Activated CD4-positive, alpha-beta T cell treated with anti-CD3 and anti-CD28 coated beads for 36 hours (primary cell): ENCODE measurements at regions of chr3 and their contacts with region 1.

Region 1: GRCh38 chr3:31559872-31560534 is 27.3 kb downstream of the STT3B start:
- DNase-seq: no peak
- ATAC-seq: peak; percentile 69
- H3K4me3 Mint-ChIP-seq: peak overlapping the region; percentile 20
- H3K27ac Mint-ChIP-seq: peak overlapping the region; percentile 66
- H3K4me1 Mint-ChIP-seq: peaks cover 85% of the 10 kb centered on the region
- H3K27me3 Mint-ChIP-seq: no peaks in the 10 kb centered on the region

Region 2: DNA sequence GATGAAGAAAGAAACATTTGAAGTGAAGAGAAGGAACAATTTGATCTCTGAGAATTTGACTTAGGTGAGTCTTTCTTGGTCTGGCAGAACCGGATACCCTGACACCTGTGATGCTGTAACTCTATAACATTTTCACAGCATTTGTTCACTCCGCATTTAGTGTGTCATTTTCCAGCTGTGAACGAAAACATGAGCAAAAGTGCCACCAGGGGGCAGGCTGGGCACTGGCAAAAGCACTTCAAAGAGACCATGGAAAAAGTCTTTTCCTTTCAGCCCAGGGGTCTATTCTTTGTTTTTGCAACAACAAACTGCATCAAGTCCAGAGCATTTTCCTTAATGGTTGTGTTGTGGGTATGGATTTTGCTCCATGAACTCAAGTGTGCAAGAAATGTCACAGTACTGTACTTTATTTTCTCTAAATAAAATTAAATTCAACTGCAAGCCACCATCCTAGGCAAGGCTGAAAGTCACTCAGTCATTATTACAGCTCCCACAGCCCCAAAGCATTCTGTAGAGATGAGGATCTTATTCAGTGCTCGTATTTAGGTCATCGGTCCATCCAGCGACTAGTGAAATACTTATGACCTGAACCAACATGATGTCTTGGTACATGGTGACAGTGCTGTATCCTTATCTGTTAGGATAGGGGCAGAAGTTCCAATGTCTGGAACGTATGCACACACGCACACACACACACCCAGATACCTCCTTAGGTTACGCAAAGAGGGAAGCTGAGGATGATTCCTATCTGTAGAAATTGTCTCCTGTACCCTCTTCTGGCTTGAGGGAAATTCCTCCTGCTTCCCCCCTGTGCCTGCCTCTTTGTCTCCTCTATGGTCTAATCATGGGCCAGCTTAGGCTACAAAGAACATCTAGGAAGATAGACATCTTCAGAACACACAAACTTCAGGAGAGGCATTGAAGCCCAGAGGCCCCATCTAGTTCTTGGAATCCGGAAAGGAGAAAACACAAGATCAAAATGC is 791.0 kb before region 1 on chr3:
- CTCF ChIA-PET with region 1: no interaction called
- POLR2A ChIA-PET with region 1: no interaction called
- intact Hi-C with region 1: no loop called
- DNase-seq: peak; percentile 86
- ATAC-seq: peak; percentile 55
- H3K4me3 Mint-ChIP-seq: no peak overlapping the region
- H3K27ac Mint-ChIP-seq: no peak overlapping the region
- H3K4me1 Mint-ChIP-seq: no peaks in the 10 kb centered on the region
- H3K27me3 Mint-ChIP-seq: peaks cover 2% of the 10 kb centered on the region

Region 3: GRCh38 chr3:31377045-31377642 is 182.9 kb before region 1 on chr3:
- CTCF ChIA-PET with region 1: no interaction called
- POLR2A ChIA-PET with region 1: no interaction called
- intact Hi-C with region 1: no loop called
- DNase-seq: peak; percentile 31
- ATAC-seq: peak; percentile 97
- H3K4me3 Mint-ChIP-seq: no peak overlapping the region
- H3K27ac Mint-ChIP-seq: no peak overlapping the region
- H3K4me1 Mint-ChIP-seq: peaks cover 15% of the 10 kb centered on the region
- H3K27me3 Mint-ChIP-seq: no peaks in the 10 kb centered on the region

Region 4: DNA sequence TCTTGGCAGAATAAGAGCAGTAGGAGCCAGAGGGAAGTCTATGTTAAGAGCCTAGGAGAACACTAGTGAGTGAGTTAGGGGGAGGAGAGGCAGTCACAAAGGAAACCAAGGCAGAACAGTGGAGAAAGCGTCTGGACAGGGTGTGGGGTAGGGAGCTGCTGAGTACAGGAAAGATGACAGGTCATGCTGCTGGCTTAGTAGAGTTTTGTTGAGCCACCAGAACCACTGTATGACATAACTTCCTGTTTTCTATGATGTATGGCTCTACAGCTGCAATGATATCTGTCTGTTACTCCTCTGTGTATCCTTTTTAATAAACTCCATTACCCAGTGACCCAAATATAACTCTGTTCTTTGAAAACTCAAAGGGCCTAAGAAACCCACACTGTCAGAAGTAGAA is 37.9 kb before region 1 on chr3:
- CTCF ChIA-PET with region 1: no interaction called
- POLR2A ChIA-PET with region 1: no interaction called
- intact Hi-C with region 1: no loop called
- DNase-seq: no peak
- ATAC-seq: peak; percentile 97
- H3K4me3 Mint-ChIP-seq: no peak overlapping the region
- H3K27ac Mint-ChIP-seq: peak overlapping the region; percentile 20
- H3K4me1 Mint-ChIP-seq: peaks cover 14% of the 10 kb centered on the region
- H3K27me3 Mint-ChIP-seq: no peaks in the 10 kb centered on the region

Region 5: DNA sequence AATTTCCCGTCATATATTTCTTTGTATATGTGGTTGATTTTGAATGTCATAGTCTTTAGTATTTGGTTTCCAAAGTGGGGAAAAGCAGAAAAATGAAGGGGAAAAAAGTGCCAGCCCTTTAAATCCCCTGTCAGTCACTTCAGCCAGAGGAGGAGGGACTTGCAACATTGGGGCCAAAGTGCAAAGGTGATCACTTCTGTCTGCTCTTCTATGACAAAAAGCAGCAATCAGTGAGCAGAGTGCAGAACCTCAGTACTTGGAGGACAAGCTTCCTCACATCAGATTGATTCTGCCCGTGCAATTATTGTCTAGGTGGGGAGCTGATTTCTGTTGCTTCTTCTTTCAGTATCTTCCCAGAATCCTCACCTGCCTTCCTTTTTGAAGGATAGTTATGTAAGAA is 32.8 kb after region 1 on chr3:
- CTCF ChIA-PET with region 1: no interaction called
- POLR2A ChIA-PET with region 1: no interaction called
- intact Hi-C with region 1: loop called in 1 of 2 experiments (anchors 5 kb)
- DNase-seq: no peak
- ATAC-seq: no peak
- H3K4me3 Mint-ChIP-seq: no peak overlapping the region
- H3K27ac Mint-ChIP-seq: peak overlapping the region; percentile 80
- H3K4me1 Mint-ChIP-seq: peaks cover 42% of the 10 kb centered on the region
- H3K27me3 Mint-ChIP-seq: no peaks in the 10 kb centered on the region